ENCODE measurements at regions of chr19 and their contacts with region 1.

Region 1: GRCh38 chr19:51716925-51717324 is 6.9 kb downstream of the HAS1 start:
- DNase-seq: no peak

Region 2: DNA sequence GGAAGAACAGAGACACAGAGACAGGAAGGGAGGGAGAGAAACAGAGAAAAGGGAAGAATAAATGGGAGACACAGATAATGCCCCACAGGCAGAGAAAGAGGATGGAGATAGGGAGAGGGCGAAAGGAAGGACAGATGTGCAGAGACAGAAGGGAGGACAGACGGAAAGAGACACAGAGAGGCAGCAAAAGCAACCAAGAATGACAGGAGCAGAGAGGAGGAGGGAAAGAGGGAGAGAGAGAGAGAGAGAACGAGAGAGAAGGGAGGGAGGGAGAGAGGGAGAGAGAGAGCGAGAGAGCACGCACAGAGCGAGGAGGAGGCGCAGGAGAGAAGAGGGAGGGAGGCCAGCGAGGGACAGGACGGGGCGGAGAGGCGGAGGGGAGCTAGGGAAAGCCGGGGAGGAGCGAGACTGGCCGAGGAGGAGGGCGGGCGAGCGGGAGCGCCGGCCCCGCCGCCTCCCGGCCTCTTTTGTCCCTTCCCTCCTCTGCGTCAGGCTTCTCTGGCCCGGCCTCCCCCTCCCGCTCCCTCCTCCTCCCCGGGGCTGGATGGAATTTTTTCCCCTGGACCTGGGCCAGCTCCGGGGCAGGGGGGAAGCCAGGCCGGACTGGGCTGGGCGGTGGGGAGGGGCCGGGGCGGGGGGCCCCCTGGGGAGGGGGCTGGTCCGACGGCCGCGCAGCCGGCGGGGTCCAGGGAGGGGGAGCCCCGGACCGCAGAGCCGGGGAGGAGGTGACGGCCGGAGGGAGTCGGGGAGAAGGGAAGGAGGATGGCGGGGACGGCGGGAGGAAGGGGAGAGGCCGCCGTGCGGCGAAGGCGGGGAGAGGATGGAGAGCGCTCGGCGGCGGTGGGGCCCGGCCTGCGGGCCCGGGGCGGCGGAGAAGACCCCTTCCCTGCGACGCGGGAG is 28.0 kb before region 1 on chr19:
- intact Hi-C with region 1: no loop called
- DNase-seq: peak; percentile 97

Region 3: DNA sequence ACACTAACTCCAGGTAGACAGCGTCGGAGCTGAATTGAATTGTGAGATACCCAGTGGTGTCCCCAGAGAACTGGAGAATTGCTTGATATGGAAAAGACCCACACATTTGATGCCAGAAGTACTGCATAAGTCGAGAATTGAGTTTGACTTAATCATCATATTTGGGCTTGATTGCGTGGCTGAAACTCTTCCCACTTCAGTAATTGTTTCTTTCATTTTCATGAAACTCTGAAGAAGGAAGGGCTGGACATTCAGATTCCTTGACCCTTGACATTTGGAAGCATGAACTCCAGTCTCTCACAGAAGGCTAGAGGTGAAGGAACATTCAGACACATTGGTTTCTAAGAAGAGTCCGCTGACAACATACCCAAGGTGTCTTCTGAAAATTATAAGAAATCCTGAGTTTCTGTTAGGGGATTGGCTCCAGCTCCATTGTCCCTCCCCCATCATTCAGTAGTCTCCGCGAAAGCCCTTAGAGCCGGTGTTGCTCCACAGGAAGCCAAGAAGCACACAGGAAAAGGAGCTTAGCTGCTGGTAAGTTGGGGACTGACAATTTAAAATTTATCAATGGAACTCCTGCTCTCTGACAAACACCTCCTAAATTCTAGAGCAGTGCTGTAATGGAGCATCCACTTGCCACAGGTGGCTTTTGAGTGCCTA is 43.9 kb after region 1 on chr19 and contains the start of gene FPR2:
- intact Hi-C with region 1: loop called in 1 of 2 experiments (anchors 1 kb)
- DNase-seq: no peak
- total RNA-seq, gene FPR2: 1.7 to 6.9 TPM